ENCODE measurements at regions of chr4 and their contacts with region 1.

Region 1: GRCh38 chr4:87390891-87391575 is at the start of gene HSD17B11:
- DNase-seq: peak; percentile 68 to 74
- H3K4me3 ChIP-seq: peak within 1 kb of the TSS; percentile 88
- H3K27ac ChIP-seq: peak within 1 kb of the TSS; percentile 55
- H3K4me1 ChIP-seq: 0 out of 2 replicates have a peak, but pooled peaks cover 5% of the 10 kb centered on the region
- H3K27me3 ChIP-seq: no peaks in the 10 kb centered on the region
- CTCF ChIP-seq: no peak; the same call in 1 of the 2 replicates
- total RNA-seq, gene HSD17B11: 26.9 and 30.5 TPM in 2 replicates

Region 2: DNA sequence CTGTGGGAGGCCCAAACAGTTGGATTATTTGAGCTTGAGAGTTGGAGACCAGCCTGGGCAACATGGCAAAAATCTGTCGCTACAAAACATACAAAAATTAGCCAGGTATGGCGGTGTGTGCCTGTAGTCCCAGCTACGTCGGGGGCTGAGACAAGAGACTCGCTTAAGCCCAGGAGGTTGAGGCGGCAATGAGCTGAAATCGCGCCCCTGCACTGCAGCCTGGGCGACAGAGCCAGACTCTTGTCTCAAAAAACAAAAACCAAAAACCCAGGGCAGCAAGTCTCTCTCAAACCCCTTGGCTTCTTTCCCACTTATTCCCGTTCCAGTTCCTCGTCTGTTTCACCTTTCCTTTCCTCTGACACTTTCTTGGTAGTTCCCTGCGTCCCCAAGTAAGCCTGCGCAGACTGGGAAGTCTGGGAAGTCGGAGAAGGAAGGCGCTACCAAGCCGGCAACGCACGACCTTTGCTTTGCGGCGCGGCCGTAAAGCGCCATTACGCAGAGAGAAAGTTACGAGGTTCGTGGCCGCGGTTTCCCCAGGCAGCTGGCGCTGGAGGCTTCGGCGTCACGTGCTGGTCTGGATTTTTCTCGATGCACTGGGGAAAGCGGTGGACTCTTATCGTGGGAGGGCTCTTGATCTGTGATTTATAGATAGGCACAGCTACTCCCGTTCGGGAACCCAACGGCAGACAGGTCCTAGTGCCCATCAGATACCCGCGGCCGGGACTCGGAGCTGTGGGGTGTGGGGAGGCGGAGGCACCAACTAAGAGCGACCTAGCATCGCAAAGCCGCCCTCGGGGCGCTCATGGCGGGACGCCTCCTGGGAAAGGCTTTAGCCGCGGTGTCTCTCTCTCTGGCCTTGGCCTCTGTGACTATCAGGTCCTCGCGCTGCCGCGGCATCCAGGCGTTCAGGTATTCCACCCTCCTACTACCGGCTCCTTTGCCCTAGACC is 31.3 kb after region 1 on chr4 and contains the start of gene NUDT9:
- CTCF ChIA-PET with region 1: no interaction called
- POLR2A ChIA-PET with region 1: interaction called, 5 read pairs
- intact Hi-C with region 1: loop called (anchors 2 kb)
- DNase-seq: peak; percentile 74 to 83
- H3K4me3 ChIP-seq: peak within 1 kb of the TSS; percentile 87
- H3K27ac ChIP-seq: peak within 1 kb of the TSS; percentile 80
- H3K4me1 ChIP-seq: peaks cover 13% of the 10 kb centered on the region; the same call in 1 of the 2 replicates
- H3K27me3 ChIP-seq: no peaks in the 10 kb centered on the region
- CTCF ChIP-seq: no peak
- total RNA-seq, gene NUDT9: 14.7 and 15.3 TPM in 2 replicates